GM12878 (cell line): ENCODE measurements at regions of chr16 and their contacts with region 1.

Region 1: GRCh38 chr16:53503270-53503923 is 388 bp upstream of the AKTIP start:
- DNase-seq: peak; percentile 99
- ATAC-seq: peak; percentile 93
- H3K4me3 ChIP-seq: peak overlapping the region; percentile 94
- H3K27ac ChIP-seq: peak overlapping the region; percentile 87
- H3K4me1 ChIP-seq: peaks cover 12% of the 10 kb centered on the region
- H3K27me3 ChIP-seq: no peaks in the 10 kb centered on the region
- CTCF ChIP-seq: no peak
- EP300 ChIP-seq: no peak
- POLR2A ChIP-seq: peak; percentile 95
- RAD21 ChIP-seq: no peak

Region 2: GRCh38 chr16:53323924-53324323 is 179.5 kb before region 1 on chr16:
- CTCF ChIA-PET with region 1: no interaction called
- POLR2A ChIA-PET with region 1: no interaction called
- RAD21 ChIA-PET with region 1: no interaction called
- SMC1A ChIA-PET with region 1: no interaction called
- in situ Hi-C with region 1: no loop called
- intact Hi-C with region 1: loop called (anchors 10 kb)
- DNase-seq: no peak
- ATAC-seq: no peak
- H3K4me3 ChIP-seq: no peak overlapping the region
- H3K27ac ChIP-seq: no peak overlapping the region
- H3K4me1 ChIP-seq: no peaks in the 10 kb centered on the region
- H3K27me3 ChIP-seq: no peaks in the 10 kb centered on the region
- CTCF ChIP-seq: no peak
- EP300 ChIP-seq: no peak
- POLR2A ChIP-seq: no peak
- RAD21 ChIP-seq: no peak

Region 3: GRCh38 chr16:53435066-53435688 is 68.2 kb before region 1 on chr16:
- CTCF ChIA-PET with region 1: interaction called, 3 read pairs
- POLR2A ChIA-PET with region 1: interaction called, 13 read pairs
- RAD21 ChIA-PET with region 1: interaction called, 20 read pairs
- SMC1A ChIA-PET with region 1: interaction called, 7 read pairs
- in situ Hi-C with region 1: no loop called
- intact Hi-C with region 1: loop called (anchors 5 kb)
- DNase-seq: peak; percentile 73
- ATAC-seq: peak; percentile 93
- H3K4me3 ChIP-seq: peak overlapping the region; percentile 89
- H3K27ac ChIP-seq: peak overlapping the region; percentile 75
- H3K4me1 ChIP-seq: no peaks in the 10 kb centered on the region
- H3K27me3 ChIP-seq: no peaks in the 10 kb centered on the region
- CTCF ChIP-seq: no peak
- EP300 ChIP-seq: no peak
- POLR2A ChIP-seq: peak; percentile 69
- RAD21 ChIP-seq: no peak

Region 4: GRCh38 chr16:53457670-53458069 is 45.7 kb before region 1 on chr16:
- CTCF ChIA-PET with region 1: interaction called, 6 read pairs
- POLR2A ChIA-PET with region 1: interaction called, 7 read pairs
- RAD21 ChIA-PET with region 1: interaction called, 7 read pairs
- SMC1A ChIA-PET with region 1: interaction called, 4 read pairs
- in situ Hi-C with region 1: no loop called
- intact Hi-C with region 1: loop called (anchors 5 kb)
- DNase-seq: peak; percentile 92
- ATAC-seq: peak; percentile 100
- H3K4me3 ChIP-seq: no peak overlapping the region
- H3K27ac ChIP-seq: peak overlapping the region; percentile 61; the same call in 1 of the 2 replicates
- H3K4me1 ChIP-seq: peaks cover 28% of the 10 kb centered on the region
- H3K27me3 ChIP-seq: no peaks in the 10 kb centered on the region
- CTCF ChIP-seq: 0 out of 6 replicates have a peak, but pooled peaks of 1 of the 3 experiments have one; percentile 8
- EP300 ChIP-seq: peak; percentile 88 to 90
- POLR2A ChIP-seq: no peak
- RAD21 ChIP-seq: peak; percentile 31

Region 5: DNA sequence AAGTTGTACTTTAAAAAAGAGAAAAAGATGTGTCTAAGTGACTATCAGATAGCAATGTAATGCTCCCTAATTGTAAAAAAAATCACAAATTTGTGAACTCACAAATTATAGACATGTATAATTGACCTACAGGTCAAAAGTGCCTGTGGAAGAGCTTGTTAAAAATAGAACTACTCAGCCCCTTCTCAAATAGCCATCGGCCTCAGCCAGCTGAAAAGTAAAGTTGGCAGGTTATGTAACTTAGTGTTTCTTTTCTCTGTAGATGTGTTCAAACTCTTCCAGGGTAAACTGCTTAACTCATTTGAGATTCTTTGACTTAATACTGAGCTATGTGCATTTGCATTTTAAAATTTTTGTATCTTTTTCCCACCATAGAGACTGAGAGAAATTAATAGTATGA is 13.6 kb before region 1 on chr16:
- CTCF ChIA-PET with region 1: no interaction called
- POLR2A ChIA-PET with region 1: interaction called, 6 read pairs
- RAD21 ChIA-PET with region 1: interaction called, 3 read pairs
- SMC1A ChIA-PET with region 1: interaction called, 12 read pairs
- in situ Hi-C with region 1: no loop called
- intact Hi-C with region 1: no loop called
- DNase-seq: no peak
- ATAC-seq: no peak
- H3K4me3 ChIP-seq: no peak overlapping the region
- H3K27ac ChIP-seq: no peak overlapping the region
- H3K4me1 ChIP-seq: no peaks in the 10 kb centered on the region
- H3K27me3 ChIP-seq: no peaks in the 10 kb centered on the region
- CTCF ChIP-seq: no peak
- EP300 ChIP-seq: no peak
- POLR2A ChIP-seq: no peak
- RAD21 ChIP-seq: no peak

Region 6: GRCh38 chr16:53518550-53519416 is 15.4 kb after region 1 on chr16:
- CTCF ChIA-PET with region 1: interaction called, 3 read pairs
- POLR2A ChIA-PET with region 1: interaction called, 12 read pairs
- RAD21 ChIA-PET with region 1: interaction called, 8 read pairs
- SMC1A ChIA-PET with region 1: interaction called, 6 read pairs
- in situ Hi-C with region 1: no loop called
- intact Hi-C with region 1: no loop called
- DNase-seq: peak; percentile 97
- ATAC-seq: peak; percentile 94
- H3K4me3 ChIP-seq: peak overlapping the region; percentile 44; the same call in 1 of the 2 replicates
- H3K27ac ChIP-seq: peak overlapping the region; percentile 94
- H3K4me1 ChIP-seq: peaks cover 21% of the 10 kb centered on the region
- H3K27me3 ChIP-seq: no peaks in the 10 kb centered on the region
- CTCF ChIP-seq: no peak
- EP300 ChIP-seq: peak; percentile 82 to 85
- POLR2A ChIP-seq: peak; percentile 65
- RAD21 ChIP-seq: no peak

Region 7: DNA sequence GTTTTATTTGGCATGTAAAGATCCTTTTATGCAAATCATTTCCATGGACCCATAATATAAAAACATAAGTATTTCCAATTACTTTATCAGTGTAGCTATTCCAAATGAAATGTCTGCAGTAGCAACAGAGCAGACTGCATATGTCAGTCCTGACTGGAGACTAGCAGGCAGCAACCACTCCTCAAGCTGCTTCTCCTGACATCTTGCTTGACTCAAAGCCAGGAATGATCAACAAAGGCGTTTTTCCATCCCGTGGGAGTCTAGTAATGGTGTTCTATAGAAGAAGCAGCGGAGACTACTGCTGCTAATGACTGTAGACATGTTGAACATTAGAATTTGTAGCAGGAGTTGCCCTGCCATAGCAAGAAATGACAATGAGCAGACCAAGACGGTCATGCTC is 72.8 kb after region 1 on chr16:
- CTCF ChIA-PET with region 1: no interaction called
- POLR2A ChIA-PET with region 1: no interaction called
- RAD21 ChIA-PET with region 1: no interaction called
- SMC1A ChIA-PET with region 1: no interaction called
- in situ Hi-C with region 1: no loop called
- intact Hi-C with region 1: no loop called
- DNase-seq: no peak
- ATAC-seq: no peak
- H3K4me3 ChIP-seq: no peak overlapping the region
- H3K27ac ChIP-seq: no peak overlapping the region
- H3K4me1 ChIP-seq: no peaks in the 10 kb centered on the region
- H3K27me3 ChIP-seq: no peaks in the 10 kb centered on the region
- CTCF ChIP-seq: no peak
- EP300 ChIP-seq: no peak
- POLR2A ChIP-seq: no peak
- RAD21 ChIP-seq: no peak

Region 8: DNA sequence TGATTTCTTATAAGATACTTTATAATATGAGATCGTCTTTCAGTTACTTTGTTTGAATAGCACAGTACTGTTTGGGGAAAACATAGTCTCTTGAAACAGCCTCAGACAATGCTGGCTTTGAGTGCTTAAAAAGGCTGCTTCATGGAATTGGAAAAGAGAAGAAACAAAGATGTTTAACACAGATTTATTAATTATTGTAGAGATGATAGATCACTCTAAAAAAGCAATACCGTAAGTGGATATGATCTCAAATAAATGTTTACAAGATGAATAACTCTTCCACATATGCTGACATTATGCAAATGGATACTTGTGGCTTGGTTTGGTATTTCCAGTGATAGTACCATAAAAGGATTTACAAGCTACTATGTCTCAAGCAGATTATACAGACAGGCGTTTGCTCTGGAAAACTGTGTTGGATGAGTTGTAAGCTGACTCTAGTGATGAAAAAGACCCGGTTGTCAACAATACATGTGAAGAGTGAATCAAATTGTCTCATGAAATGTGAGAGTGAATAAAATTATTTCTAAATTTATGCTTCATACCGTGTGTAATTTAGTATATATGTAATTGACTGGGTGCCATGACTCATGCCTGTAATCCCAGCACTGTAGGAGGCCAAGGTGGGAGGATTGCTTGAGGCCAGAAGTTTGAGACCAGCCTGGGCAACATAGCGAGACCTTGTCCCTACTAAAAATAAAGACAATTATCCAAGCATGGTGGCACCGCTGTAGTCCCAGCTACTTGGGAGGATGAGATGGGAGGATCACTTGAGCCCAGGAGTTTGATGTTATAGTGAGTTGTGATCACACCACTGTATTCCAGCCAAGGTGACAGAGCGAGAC is 305.9 kb after region 1 on chr16:
- CTCF ChIA-PET with region 1: no interaction called
- POLR2A ChIA-PET with region 1: no interaction called
- RAD21 ChIA-PET with region 1: no interaction called
- SMC1A ChIA-PET with region 1: no interaction called
- in situ Hi-C with region 1: no loop called
- intact Hi-C with region 1: no loop called
- DNase-seq: no peak
- ATAC-seq: no peak
- H3K4me3 ChIP-seq: no peak overlapping the region
- H3K27ac ChIP-seq: no peak overlapping the region
- H3K4me1 ChIP-seq: no peaks in the 10 kb centered on the region
- H3K27me3 ChIP-seq: no peaks in the 10 kb centered on the region
- CTCF ChIP-seq: no peak
- EP300 ChIP-seq: no peak
- POLR2A ChIP-seq: no peak
- RAD21 ChIP-seq: no peak